ENCODE measurements at regions of chr9 and their contacts with region 1.

Region 1: GRCh38 chr9:109469646-109470358 is 28.3 kb downstream of the PTPN3 start:
- DNase-seq: peak; percentile 22
- H3K4me3 ChIP-seq: no peak overlapping the region
- H3K27me3 ChIP-seq: no peaks in the 10 kb centered on the region
- CTCF ChIP-seq: peak; percentile 92

Region 2: GRCh38 chr9:109421026-109421970 is 48.5 kb before region 1 on chr9:
- CTCF ChIA-PET with region 1: interaction called, 11 read pairs
- POLR2A ChIA-PET with region 1: no interaction called
- DNase-seq: no peak
- H3K4me3 ChIP-seq: no peak overlapping the region
- H3K27me3 ChIP-seq: no peaks in the 10 kb centered on the region
- CTCF ChIP-seq: no peak

Region 3: DNA sequence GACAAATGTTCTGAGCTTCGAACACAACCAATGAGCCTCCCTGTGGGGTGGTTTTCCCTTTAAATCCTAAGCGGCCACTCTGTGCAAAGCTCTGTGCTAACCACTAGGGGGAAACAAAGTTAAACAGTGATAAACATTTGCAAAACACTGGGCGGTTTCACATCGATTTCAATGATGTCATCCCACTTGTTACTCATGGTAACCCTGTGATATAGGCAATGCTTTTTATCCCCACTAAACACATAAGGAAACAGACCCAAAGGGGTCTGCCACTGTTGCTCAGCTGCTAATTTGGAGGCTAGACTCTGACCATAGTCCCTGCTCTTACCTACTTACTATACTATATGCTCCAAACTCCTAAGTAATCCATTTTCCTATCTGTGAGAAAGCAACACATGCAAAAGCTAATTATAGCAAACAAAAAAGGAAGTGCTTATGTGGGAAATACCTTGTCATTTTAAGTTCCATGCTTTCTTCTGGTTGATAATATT is 29.0 kb before region 1 on chr9:
- CTCF ChIA-PET with region 1: interaction called, 120 read pairs
- POLR2A ChIA-PET with region 1: interaction called, 5 read pairs
- DNase-seq: peak; percentile 26
- H3K4me3 ChIP-seq: no peak overlapping the region
- H3K27me3 ChIP-seq: no peaks in the 10 kb centered on the region
- CTCF ChIP-seq: peak; percentile 87

Region 4: GRCh38 chr9:109448223-109448622 is 21.6 kb before region 1 on chr9:
- CTCF ChIA-PET with region 1: interaction called, 120 read pairs
- POLR2A ChIA-PET with region 1: no interaction called
- DNase-seq: no peak
- H3K4me3 ChIP-seq: no peak overlapping the region
- H3K27me3 ChIP-seq: no peaks in the 10 kb centered on the region
- CTCF ChIP-seq: no peak

Region 5: DNA sequence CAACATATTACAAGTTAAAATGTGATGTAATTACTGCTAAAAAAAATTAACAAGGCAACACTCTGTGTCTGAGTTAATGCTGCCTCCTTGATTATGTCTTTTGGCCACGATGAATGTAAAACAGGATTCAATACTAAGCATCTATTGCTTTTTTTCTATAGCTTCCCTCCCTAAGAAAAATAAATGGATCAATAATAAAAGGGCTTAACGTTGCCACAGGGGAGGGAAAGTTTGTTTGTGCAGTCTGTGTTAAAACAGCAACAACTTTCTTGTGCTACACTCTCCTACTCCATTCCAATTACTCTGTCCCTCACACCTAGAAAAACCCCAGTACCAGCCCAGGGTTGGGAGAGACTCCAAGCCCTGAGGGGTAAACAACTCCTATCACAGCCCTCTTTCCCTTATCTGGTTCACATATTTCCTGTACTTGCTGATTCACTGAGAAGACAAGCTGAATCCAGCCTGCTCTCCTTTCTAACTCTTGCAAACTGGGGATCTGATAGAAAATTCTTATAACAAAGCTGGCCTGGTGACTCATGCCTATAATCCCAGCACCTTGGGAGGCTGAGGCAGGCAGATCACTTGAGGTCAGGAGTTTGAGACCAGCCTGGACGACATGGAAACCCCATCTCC is 16.5 kb before region 1 on chr9:
- CTCF ChIA-PET with region 1: interaction called, 25 read pairs
- POLR2A ChIA-PET with region 1: no interaction called
- DNase-seq: peak; percentile 32
- H3K4me3 ChIP-seq: no peak overlapping the region
- H3K27me3 ChIP-seq: no peaks in the 10 kb centered on the region; the same call in 1 of the 2 replicates
- CTCF ChIP-seq: no peak

Region 6: DNA sequence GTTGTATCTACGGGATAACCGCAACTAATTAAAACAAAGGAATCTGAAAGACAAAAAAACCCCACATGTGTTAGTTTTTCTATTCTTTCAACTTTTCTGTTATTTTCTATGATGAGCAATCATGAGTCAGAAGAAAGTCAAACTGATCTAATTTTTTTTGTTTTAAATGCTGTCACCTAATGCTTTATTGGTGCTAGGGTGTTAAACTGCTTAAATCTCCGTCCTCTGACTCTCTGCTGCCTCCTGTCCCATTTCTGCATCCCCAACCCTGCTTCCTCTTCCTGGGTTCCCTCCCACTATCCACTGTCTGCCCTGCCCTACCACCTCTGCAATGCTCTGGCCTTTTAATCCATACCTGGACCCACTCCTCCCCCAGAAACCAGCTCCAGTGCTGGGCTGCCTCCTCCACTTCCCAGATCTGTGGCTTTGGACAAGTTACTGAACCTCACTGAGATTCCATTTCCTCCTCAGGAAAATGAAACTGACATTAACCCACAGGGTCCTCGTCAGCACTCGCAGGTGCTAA is 12.7 kb after region 1 on chr9:
- CTCF ChIA-PET with region 1: interaction called, 18 read pairs
- POLR2A ChIA-PET with region 1: no interaction called
- DNase-seq: no peak
- H3K4me3 ChIP-seq: no peak overlapping the region
- H3K27me3 ChIP-seq: no peaks in the 10 kb centered on the region
- CTCF ChIP-seq: no peak